Transverse colon (tissue), 4 donors: ENCODE measurements at regions of chr1 and their contacts with region 1.

Region 1: GRCh38 chr1:2031546-2032540 is 12.7 kb downstream of the GABRD start:
- DNase-seq: no peak
- H3K4me3 ChIP-seq: no peak overlapping the region
- H3K27ac ChIP-seq: no peak overlapping the region
- H3K4me1 ChIP-seq: no peaks in the 10 kb centered on the region
- H3K27me3 ChIP-seq: no peaks in the 10 kb centered on the region
- CTCF ChIP-seq: no peak
- EP300 ChIP-seq: no peak
- POLR2A ChIP-seq: no peak

Region 2: GRCh38 chr1:1943834-1944570 is 87.8 kb before region 1 on chr1:
- in situ Hi-C with region 1: loop called in 1 of 4 experiments (anchors 10 kb)
- intact Hi-C with region 1: no loop called
- DNase-seq: peak; percentile 54
- H3K4me3 ChIP-seq: peak overlapping the region in 1 of 4 donors; percentile 17
- H3K27ac ChIP-seq: no peak overlapping the region
- H3K4me1 ChIP-seq: peaks cover 0 to 16% (median 11%) of the 10 kb centered on the region in 4 donors
- H3K27me3 ChIP-seq: peaks cover 26% of the 10 kb centered on the region
- CTCF ChIP-seq: peak; percentile 86 to 91 (median 89)
- EP300 ChIP-seq: no peak
- POLR2A ChIP-seq: no peak